ENCODE measurements at regions of chrX and their contacts with region 1.

Region 1: GRCh38 chrX:106039920-106040319 is 1.4 kb upstream of the SERPINA7 start:
- DNase-seq: peak; percentile 52
- ATAC-seq: peak; percentile 71
- H3K4me3 ChIP-seq: peak overlapping the region in 2 of 3 experiments; percentile 21 to 55; a peak in 1 of 6 replicates
- H3K27ac ChIP-seq: peak overlapping the region; percentile 86
- H3K4me1 ChIP-seq: peaks cover 44% of the 10 kb centered on the region
- H3K27me3 ChIP-seq: no peaks in the 10 kb centered on the region
- CTCF ChIP-seq: peak; percentile 72
- EP300 ChIP-seq: no peak
- POLR2A ChIP-seq: no peak
- RAD21 ChIP-seq: peak; percentile 34; the same call in 1 of the 2 replicates

Region 2: DNA sequence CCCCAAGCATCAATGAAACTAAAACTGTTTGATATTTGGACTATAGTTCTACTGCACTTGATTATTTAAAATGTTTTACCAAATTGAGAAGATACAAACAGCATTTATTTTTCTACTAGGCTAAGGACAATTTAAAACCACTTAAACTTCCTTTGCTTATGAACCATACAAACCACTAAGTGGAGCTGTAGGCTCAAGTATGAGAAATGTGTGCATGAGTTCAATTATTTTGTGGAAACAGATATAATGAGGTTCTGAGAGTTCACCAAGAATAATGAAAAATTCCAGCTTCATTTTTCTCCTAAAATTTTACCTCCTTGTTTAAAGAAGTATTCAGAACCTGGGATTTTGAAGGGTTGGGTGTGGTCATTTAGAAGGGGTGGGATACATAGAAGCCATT is 64.5 kb before region 1 on chrX:
- CTCF ChIA-PET with region 1: interaction called, 16 read pairs
- POLR2A ChIA-PET with region 1: interaction called, 3 read pairs
- in situ Hi-C with region 1: no loop called
- intact Hi-C with region 1: loop called (anchors 2 kb)
- DNase-seq: peak; percentile 33
- ATAC-seq: no peak
- H3K4me3 ChIP-seq: no peak overlapping the region
- H3K27ac ChIP-seq: no peak overlapping the region
- H3K4me1 ChIP-seq: peaks cover 12% of the 10 kb centered on the region
- H3K27me3 ChIP-seq: no peaks in the 10 kb centered on the region
- CTCF ChIP-seq: peak; percentile 60
- EP300 ChIP-seq: no peak
- POLR2A ChIP-seq: no peak
- RAD21 ChIP-seq: peak; percentile 56; the same call in 1 of the 2 replicates

Measured in HepG2 (cell line).